Posterior cingulate gyrus (tissue), 11 donors: ENCODE measurements at regions of chr15 and their contacts with region 1.

Region 1: DNA sequence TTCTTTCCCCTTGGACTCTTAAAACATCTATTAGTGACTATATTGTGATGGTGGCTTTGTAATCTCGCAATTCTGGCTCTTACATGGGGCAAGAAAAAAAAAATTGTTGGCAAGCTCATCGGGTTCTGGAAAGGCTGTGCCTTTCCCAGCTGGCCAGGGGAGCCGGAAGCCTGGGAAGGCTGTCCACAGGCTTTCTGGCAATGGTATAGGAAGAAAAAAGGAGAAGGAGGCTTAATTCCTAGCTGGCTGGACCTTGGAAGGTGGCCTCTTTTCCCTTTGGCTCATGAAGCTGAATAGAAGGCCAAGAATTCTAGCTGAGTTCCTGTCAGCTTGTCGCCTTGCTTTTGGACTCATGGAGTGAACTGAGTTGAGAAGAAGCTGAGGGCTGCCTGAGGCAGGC is 243.5 kb upstream of the SEMA6D start:
- DNase-seq: peak in 3 of 10 donors; percentile 8 to 75 (median 73)

Region 2: GRCh38 chr15:47717036-47717611 is 243.3 kb after region 1 on chr15 and contains the start of gene SEMA6D:
- intact Hi-C with region 1: loop called (anchors 10 kb)
- DNase-seq: peak; percentile 67 to 97 (median 76)